ENCODE measurements at regions of chr3 and their contacts with region 1.

Region 1: DNA sequence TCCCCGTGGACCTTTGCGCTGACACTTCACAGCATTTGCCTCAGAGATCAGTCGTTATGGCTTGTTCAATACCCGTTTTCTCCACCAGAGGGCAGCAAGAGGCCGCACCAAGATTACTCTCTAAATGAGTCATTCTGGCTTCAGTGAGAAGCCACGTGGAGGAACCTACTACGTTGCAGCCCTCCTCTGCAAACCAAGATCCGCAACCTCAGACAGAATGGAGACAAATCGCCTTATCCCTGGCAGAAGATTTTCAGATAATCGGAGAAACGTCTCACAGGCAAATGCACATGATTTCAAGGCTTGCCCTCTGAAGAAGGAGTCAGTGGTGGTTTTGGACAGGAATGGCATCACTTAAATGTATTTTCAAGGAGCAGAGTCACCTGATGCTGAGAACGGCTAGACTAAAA is 60.5 kb downstream of the GTPBP8 start:
- DNase-seq: peak; percentile 62 to 73 (median 65)
- ATAC-seq: peak; percentile 95
- H3K4me3 ChIP-seq: no peak overlapping the region
- H3K27ac ChIP-seq: no peak overlapping the region
- H3K4me1 ChIP-seq: no peaks in the 10 kb centered on the region; a peak in 2 of 5 replicates
- H3K27me3 ChIP-seq: no peaks in the 10 kb centered on the region; a peak in 1 of 5 replicates
- CTCF ChIP-seq: peak; percentile 66 to 79 (median 75)
- EP300 ChIP-seq: no peak
- POLR2A ChIP-seq: no peak
- RAD21 ChIP-seq: peak; percentile 78 to 88

Region 2: DNA sequence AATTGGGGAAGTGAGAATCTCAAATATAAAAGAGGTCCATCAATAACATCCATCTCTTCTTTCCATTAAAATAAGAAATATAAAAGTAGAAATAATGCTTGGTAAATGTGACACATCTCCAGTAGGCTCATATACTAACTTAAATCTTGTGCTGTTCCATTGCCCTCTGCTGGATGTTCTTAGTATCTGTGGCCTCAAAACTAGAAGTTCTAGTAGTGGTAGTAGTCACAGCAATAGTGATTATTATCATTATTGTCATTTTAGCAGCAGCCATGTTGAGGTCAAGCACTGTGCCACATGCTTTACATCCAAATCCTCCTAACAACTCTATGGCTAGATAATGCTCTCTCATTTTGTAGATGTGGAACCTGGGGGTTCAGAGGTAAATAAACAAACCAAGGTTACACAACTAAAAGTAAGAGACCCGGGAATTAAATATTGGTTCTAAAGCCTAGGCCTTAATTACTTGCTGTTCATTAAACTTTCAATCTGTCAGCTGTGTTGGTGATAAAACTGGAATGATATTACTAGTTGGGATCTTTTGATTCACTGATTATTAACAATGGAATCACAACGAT is 531.8 kb before region 1 on chr3:
- CTCF ChIA-PET with region 1: no interaction called
- POLR2A ChIA-PET with region 1: no interaction called
- in situ Hi-C with region 1: no loop called
- intact Hi-C with region 1: no loop called
- DNase-seq: peak; percentile 14 to 41 (median 22)
- ATAC-seq: peak; percentile 91
- H3K4me3 ChIP-seq: no peak overlapping the region
- H3K27ac ChIP-seq: no peak overlapping the region
- H3K4me1 ChIP-seq: no peaks in the 10 kb centered on the region
- H3K27me3 ChIP-seq: no peaks in the 10 kb centered on the region
- CTCF ChIP-seq: peak; percentile 45 to 66 (median 47); a peak in 4 of 6 replicates
- EP300 ChIP-seq: no peak
- POLR2A ChIP-seq: no peak
- RAD21 ChIP-seq: peak; percentile 59 to 77

Region 3: GRCh38 chr3:113606539-113607218 is 555.4 kb after region 1 on chr3:
- CTCF ChIA-PET with region 1: no interaction called
- POLR2A ChIA-PET with region 1: no interaction called
- in situ Hi-C with region 1: loop called (anchors 25 kb)
- intact Hi-C with region 1: no loop called
- DNase-seq: no peak
- ATAC-seq: no peak
- H3K4me3 ChIP-seq: no peak overlapping the region
- H3K27ac ChIP-seq: no peak overlapping the region
- H3K4me1 ChIP-seq: no peaks in the 10 kb centered on the region
- H3K27me3 ChIP-seq: peaks cover 0 to 20% of the 10 kb centered on the region in 2 experiments; a peak in 4 of 5 replicates
- CTCF ChIP-seq: no peak
- EP300 ChIP-seq: no peak
- POLR2A ChIP-seq: no peak
- RAD21 ChIP-seq: no peak

Measured in K562 (cell line).